ENCODE measurements at regions of chr12 and their contacts with region 1.

Region 1: GRCh38 chr12:39443081-39443928 is at the start of gene KIF21A:
- DNase-seq: peak; percentile 95 to 99
- H3K4me3 ChIP-seq: peak within 1 kb of the TSS; percentile 70
- H3K4me3 Mint-ChIP-seq: peak within 1 kb of the TSS; percentile 99
- H3K27ac Mint-ChIP-seq: peak within 1 kb of the TSS; percentile 96
- H3K4me1 ChIP-seq: peaks cover 31% of the 10 kb centered on the region
- H3K4me1 Mint-ChIP-seq: peaks cover 9% of the 10 kb centered on the region
- H3K27me3 ChIP-seq: no peaks in the 10 kb centered on the region
- H3K27me3 Mint-ChIP-seq: no peaks in the 10 kb centered on the region
- CTCF ChIP-seq: peak; percentile 54 to 77
- total RNA-seq, gene KIF21A: 67.8 and 77.5 TPM in 2 replicates

Region 2: GRCh38 chr12:39237004-39237403 is 206.3 kb before region 1 on chr12:
- CTCF ChIA-PET with region 1: no interaction called
- POLR2A ChIA-PET with region 1: no interaction called
- intact Hi-C with region 1: loop called (anchors 5 kb)
- DNase-seq: peak in 1 of 2 experiments; percentile 49
- H3K4me3 ChIP-seq: no peak overlapping the region
- H3K4me3 Mint-ChIP-seq: no peak overlapping the region
- H3K27ac Mint-ChIP-seq: no peak overlapping the region
- H3K4me1 ChIP-seq: peaks cover 52% of the 10 kb centered on the region
- H3K4me1 Mint-ChIP-seq: peaks cover 29% of the 10 kb centered on the region
- H3K27me3 ChIP-seq: no peaks in the 10 kb centered on the region
- H3K27me3 Mint-ChIP-seq: no peaks in the 10 kb centered on the region
- CTCF ChIP-seq: no peak

Region 3: DNA sequence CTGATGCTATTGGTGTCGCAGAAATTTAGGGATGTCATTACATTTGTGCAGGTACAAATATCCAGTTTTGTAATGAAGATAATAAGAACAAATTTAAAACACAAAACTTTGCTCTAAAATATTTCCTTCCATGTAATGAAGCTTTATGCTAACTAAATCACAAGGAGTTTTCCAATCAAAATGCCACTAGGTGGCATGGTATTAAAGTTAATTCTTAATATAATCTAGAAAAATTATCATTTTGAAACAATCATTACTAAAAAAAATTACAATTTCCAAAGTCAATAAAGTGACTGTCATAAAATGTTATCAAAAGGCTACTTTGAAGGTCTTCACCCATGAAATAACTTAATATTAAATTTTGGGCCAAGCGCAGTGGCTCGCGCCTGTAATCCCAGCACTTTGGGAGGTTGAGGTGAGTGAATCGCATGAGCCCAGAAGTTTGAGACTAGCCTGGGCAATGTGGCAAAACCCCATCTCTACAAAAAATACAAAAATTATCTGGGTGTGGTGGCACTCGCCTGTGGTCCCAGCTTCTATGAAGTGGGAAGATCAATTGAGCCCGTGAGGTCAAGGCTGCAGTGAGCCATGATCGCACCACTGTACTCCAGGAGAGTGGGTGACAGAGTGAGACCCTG is 77.8 kb before region 1 on chr12:
- CTCF ChIA-PET with region 1: no interaction called
- POLR2A ChIA-PET with region 1: no interaction called
- intact Hi-C with region 1: loop called (anchors 1 kb)
- DNase-seq: no peak
- H3K4me3 ChIP-seq: no peak overlapping the region
- H3K4me3 Mint-ChIP-seq: no peak overlapping the region
- H3K27ac Mint-ChIP-seq: no peak overlapping the region
- H3K4me1 ChIP-seq: peaks cover 22% of the 10 kb centered on the region
- H3K4me1 Mint-ChIP-seq: peaks cover 6% of the 10 kb centered on the region
- H3K27me3 ChIP-seq: no peaks in the 10 kb centered on the region
- H3K27me3 Mint-ChIP-seq: no peaks in the 10 kb centered on the region
- CTCF ChIP-seq: no peak

Region 4: GRCh38 chr12:39420043-39420442 is 23.3 kb before region 1 on chr12:
- CTCF ChIA-PET with region 1: no interaction called
- POLR2A ChIA-PET with region 1: no interaction called
- intact Hi-C with region 1: loop called (anchors 2 kb)
- DNase-seq: no peak
- H3K4me3 ChIP-seq: no peak overlapping the region
- H3K4me3 Mint-ChIP-seq: no peak overlapping the region
- H3K27ac Mint-ChIP-seq: peak overlapping the region; percentile 78
- H3K4me1 ChIP-seq: peaks cover 18% of the 10 kb centered on the region
- H3K4me1 Mint-ChIP-seq: peaks cover 12% of the 10 kb centered on the region
- H3K27me3 ChIP-seq: no peaks in the 10 kb centered on the region
- H3K27me3 Mint-ChIP-seq: no peaks in the 10 kb centered on the region
- CTCF ChIP-seq: no peak

Region 5: GRCh38 chr12:39619660-39620433 is 176.5 kb after region 1 on chr12 and contains the start of gene ABCD2:
- CTCF ChIA-PET with region 1: no interaction called
- POLR2A ChIA-PET with region 1: no interaction called
- intact Hi-C with region 1: loop called (anchors 10 kb)
- DNase-seq: peak; percentile 66 to 67
- H3K4me3 ChIP-seq: peak within 1 kb of the TSS; percentile 34
- H3K4me3 Mint-ChIP-seq: no peak within 1 kb of the TSS
- H3K27ac Mint-ChIP-seq: no peak within 1 kb of the TSS
- H3K4me1 ChIP-seq: 0 out of 2 replicates have a peak, but pooled peaks cover 3% of the 10 kb centered on the region
- H3K4me1 Mint-ChIP-seq: no peaks in the 10 kb centered on the region
- H3K27me3 ChIP-seq: no peaks in the 10 kb centered on the region
- H3K27me3 Mint-ChIP-seq: no peaks in the 10 kb centered on the region
- CTCF ChIP-seq: no peak
- total RNA-seq, gene ABCD2: not detected in 2 replicates

Measured in Caco-2 (cell line).